ENCODE measurements at regions of chrX and their contacts with region 1.

Region 1: DNA sequence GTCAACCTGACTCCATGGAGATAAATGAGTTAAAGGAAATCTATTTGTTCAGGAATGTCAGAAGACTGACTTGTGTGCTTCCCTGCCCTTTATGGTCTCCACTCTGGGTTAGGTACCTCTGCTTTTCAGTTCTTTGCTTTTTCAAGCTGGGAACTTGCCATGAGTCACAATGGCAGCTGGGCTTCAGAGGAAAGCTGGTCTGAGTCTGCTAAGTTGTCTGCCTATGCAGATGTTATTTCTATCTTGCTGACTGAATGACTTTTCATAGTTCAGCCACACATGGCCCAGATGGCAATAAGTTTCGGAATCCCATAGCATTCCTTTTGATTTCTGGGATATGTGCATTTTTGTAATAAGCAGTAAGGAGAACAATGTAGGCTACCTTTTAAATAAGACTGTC is 337.9 kb upstream of the FGF13 start:
- DNase-seq: no peak
- ATAC-seq: no peak
- H3K4me3 ChIP-seq: no peak overlapping the region
- H3K27ac ChIP-seq: no peak overlapping the region
- H3K4me1 ChIP-seq: no peaks in the 10 kb centered on the region
- H3K27me3 ChIP-seq: no peaks in the 10 kb centered on the region

Region 2: DNA sequence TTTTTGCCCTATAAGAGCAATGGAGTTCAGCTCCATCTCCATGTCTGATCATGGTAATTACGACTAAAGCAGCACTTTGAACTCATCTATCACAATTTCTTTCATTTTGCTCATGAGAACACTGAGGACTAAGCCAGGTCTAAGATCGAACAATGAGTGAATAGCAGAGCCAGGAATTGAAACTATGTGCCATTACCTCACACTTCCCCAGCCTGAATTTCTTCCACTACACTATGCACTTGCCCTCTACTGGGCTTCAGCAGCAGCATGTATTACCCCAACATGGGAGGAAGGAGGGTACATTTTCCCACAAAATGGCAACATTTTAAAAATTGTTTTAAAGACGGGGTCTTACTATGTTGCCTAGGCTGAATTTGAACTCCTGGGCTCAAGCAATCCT is 63.2 kb before region 1 on chrX:
- intact Hi-C with region 1: loop called in 1 of 2 experiments (anchors 10 kb)
- DNase-seq: no peak
- ATAC-seq: no peak
- H3K4me3 ChIP-seq: no peak overlapping the region
- H3K27ac ChIP-seq: no peak overlapping the region
- H3K4me1 ChIP-seq: no peaks in the 10 kb centered on the region
- H3K27me3 ChIP-seq: no peaks in the 10 kb centered on the region

Region 3: GRCh38 chrX:138996268-138996667 is 53.2 kb before region 1 on chrX:
- intact Hi-C with region 1: no loop called
- DNase-seq: no peak
- ATAC-seq: no peak
- H3K4me3 ChIP-seq: no peak overlapping the region
- H3K27ac ChIP-seq: no peak overlapping the region
- H3K4me1 ChIP-seq: no peaks in the 10 kb centered on the region
- H3K27me3 ChIP-seq: no peaks in the 10 kb centered on the region

Region 4: DNA sequence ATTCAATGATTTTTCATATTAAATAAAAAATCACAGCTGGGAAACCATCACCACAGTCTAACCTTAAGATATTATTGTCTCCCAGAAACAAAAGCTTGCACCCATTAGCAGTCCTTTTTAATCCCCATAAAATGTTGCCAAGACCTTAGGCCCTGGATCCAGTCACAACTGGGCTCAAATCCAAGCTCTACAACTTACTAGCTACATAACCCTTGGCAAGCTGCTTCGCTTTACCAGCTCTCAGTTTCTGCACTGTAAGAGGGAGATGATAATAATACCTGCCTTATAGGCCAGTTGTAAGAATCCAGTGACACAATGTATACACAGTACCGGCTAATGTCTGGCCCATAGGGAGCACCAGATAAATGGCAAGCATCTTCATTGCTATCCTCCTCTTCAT is 63.0 kb after region 1 on chrX:
- intact Hi-C with region 1: no loop called
- DNase-seq: no peak
- ATAC-seq: no peak
- H3K4me3 ChIP-seq: no peak overlapping the region
- H3K27ac ChIP-seq: no peak overlapping the region
- H3K4me1 ChIP-seq: peaks cover 0 to 2% of the 10 kb centered on the region in 2 donors
- H3K27me3 ChIP-seq: no peaks in the 10 kb centered on the region